Ascending aorta (tissue), 2 donors: ENCODE measurements at regions of chr7 and their contacts with region 1.

Region 1: DNA sequence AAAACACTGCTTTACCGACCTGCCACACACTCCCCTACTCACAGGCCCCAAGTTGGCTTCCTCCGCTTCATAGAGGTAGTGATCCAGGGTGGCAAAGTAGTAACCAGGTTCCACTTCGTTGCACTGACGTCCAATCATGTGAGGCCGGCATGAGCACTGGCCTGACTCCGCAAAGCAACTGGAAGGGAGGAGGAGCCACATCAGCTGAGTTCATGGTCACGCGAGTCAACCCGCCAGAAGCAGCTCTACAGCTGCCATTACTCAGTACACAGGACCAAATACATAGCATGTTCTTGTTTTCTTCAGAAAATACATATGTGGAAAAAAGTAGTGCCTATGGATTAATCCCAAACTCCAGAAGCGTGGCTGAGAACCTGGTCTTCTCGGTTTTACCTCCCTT is 38.5 kb downstream of the LAMB1 start:
- DNase-seq: no peak
- H3K4me3 ChIP-seq: no peak overlapping the region
- H3K27ac ChIP-seq: no peak overlapping the region
- H3K4me1 ChIP-seq: peaks cover 0 to 13% of the 10 kb centered on the region in 2 donors
- H3K27me3 ChIP-seq: no peaks in the 10 kb centered on the region
- CTCF ChIP-seq: no peak

Region 2: DNA sequence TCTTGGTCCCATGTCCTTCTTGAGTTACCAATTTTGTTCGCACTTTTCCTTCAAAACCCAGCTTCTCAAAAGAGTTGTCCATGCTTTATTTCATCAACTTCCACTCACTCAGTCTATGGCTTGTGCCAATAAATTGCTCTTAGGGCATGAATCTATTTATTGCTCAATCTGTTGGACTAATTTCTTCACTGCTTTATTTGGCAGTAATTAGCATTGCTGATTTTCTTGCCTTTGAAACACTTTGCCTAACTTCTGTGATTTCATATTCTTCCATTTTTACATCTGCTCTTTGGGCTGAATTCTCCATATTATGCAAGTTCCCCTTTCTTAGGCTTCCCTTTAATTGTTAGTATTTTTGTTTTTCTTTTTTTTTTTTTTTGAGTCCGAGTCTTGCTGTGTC is 56.7 kb before region 1 on chr7:
- intact Hi-C with region 1: no loop called
- DNase-seq: no peak
- H3K4me3 ChIP-seq: no peak overlapping the region
- H3K27ac ChIP-seq: no peak overlapping the region
- H3K4me1 ChIP-seq: no peaks in the 10 kb centered on the region
- H3K27me3 ChIP-seq: no peaks in the 10 kb centered on the region
- CTCF ChIP-seq: no peak

Region 3: GRCh38 chr7:107948645-107949497 is 15.6 kb before region 1 on chr7:
- intact Hi-C with region 1: loop called (anchors 2 kb)
- DNase-seq: peak in 1 of 2 donors; percentile 83
- H3K4me3 ChIP-seq: no peak overlapping the region
- H3K27ac ChIP-seq: peak overlapping the region; percentile 74 to 78
- H3K4me1 ChIP-seq: peaks cover 8 to 39% of the 10 kb centered on the region in 2 donors
- H3K27me3 ChIP-seq: no peaks in the 10 kb centered on the region
- CTCF ChIP-seq: no peak

Region 4: DNA sequence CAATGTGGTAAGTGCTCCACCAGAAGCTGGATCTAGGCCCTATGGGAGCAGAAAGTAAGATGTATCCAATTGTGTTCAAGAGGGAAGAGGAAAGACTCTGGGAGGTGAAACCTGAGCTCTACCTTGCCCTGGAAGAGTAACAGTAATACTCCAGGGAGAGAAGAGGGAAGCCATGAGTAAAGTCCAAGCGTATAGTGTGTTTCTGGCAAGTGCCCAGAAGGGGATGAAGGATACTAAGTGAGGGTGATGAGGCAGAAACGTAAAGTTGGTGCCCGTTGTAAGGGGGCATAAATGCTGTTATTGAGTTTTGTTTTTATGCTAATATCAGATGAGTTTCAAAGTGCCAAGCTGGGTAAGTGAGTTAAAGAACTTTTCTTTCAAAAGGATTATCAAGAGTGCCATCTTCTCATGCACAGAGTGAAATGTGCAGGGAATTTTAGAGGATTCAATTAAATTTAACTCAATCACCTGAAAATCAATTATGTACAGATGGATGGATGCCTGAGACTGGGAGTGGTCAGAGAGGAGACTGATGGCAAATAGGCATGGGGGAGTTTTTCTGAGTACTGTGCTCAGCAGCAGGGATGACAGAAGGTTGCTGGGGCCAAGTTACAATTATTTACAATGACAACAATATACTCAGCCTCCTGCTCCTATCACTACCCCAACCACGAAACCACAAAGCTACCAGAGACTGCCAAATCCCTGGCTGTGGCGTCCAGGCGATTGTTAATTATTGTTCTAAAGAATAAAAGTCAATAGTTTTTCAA is 288.9 kb after region 1 on chr7:
- intact Hi-C with region 1: no loop called
- DNase-seq: no peak
- H3K4me3 ChIP-seq: no peak overlapping the region
- H3K27ac ChIP-seq: no peak overlapping the region
- H3K4me1 ChIP-seq: no peaks in the 10 kb centered on the region
- H3K27me3 ChIP-seq: no peaks in the 10 kb centered on the region
- CTCF ChIP-seq: no peak